ENCODE measurements at regions of chr1 and their contacts with region 1.

Region 1: GRCh38 chr1:156096640-156097391 is 14.6 kb upstream of the MEX3A start:
- DNase-seq: peak; percentile 77
- H3K4me3 ChIP-seq: no peak overlapping the region
- H3K27ac ChIP-seq: peak overlapping the region; percentile 49
- H3K4me1 ChIP-seq: peaks cover 33% of the 10 kb centered on the region
- H3K27me3 ChIP-seq: no peaks in the 10 kb centered on the region
- CTCF ChIP-seq: peak; percentile 96 to 100

Region 2: DNA sequence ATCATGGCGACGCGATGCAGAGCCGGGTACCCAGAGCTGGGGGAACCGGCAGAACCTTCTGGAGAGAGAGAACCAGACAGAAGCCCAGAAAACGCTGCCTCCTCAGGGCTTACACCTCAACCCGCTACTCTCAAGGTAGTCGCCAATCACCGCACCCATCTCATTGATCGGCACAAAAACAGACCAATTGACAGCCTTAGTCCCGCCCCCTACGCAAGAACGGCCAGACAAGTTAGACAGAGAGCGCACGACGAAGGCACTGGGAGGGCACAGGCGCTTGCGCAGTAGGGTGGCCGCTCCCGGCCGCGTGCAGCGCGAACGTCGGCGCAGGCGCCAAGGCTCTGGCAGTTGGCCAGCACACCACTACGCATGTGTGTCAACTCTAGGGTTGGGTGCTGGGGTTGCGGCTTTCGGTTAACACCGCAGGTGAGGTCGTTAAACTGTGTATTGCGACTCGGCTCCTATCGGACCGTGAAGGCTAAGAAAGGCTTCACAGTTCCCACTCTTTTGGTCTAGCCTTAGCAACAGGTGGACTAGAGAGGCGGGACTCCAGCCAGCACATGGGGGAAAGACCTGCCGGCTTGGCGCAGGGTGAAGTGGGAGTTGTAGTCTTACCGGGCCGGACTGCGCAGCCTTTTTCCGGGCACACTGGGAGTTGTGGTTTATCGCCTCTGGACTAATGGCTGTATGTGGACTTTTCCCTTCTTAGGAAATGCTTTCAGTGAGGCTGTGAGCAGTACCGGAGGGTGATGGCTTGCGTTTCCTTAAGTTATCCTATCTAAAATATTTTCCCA is 241.6 kb after region 1 on chr1 and contains the starts of genes CCT3 and TSACC:
- CTCF ChIA-PET with region 1: no interaction called
- dilution Hi-C with region 1: no loop called
- in situ Hi-C with region 1: loop called in 1 of 2 experiments (anchors 10 kb)
- intact Hi-C with region 1: no loop called
- DNase-seq: peak; percentile 100
- H3K4me3 ChIP-seq: peak within 1 kb of the TSS; percentile 76 to 99 (median 97)
- H3K27ac ChIP-seq: peak within 1 kb of the TSS; percentile 64
- H3K4me1 ChIP-seq: peaks cover 7% of the 10 kb centered on the region
- H3K27me3 ChIP-seq: no peaks in the 10 kb centered on the region
- CTCF ChIP-seq: no peak
- total RNA-seq, gene CCT3: 323 to 345 TPM
- total RNA-seq, gene TSACC: not detected

Measured in mammary epithelial cell (primary cell).